ENCODE measurements at regions of chr5 and their contacts with region 1.

Region 1: GRCh38 chr5:41270423-41271251 is 57.3 kb upstream of the C6 start:
- DNase-seq: peak; percentile 15
- H3K4me3 ChIP-seq: no peak overlapping the region
- H3K27ac ChIP-seq: no peak overlapping the region
- H3K4me1 ChIP-seq: peaks cover 0 to 7% (median 0%) of the 10 kb centered on the region in 4 donors
- H3K27me3 ChIP-seq: no peaks in the 10 kb centered on the region
- CTCF ChIP-seq: peak; percentile 53 to 68 (median 55)
- EP300 ChIP-seq: no peak
- POLR2A ChIP-seq: no peak

Region 2: GRCh38 chr5:40791715-40792139 is 478.9 kb before region 1 on chr5:
- in situ Hi-C with region 1: no loop called
- intact Hi-C with region 1: no loop called
- DNase-seq: no peak
- H3K4me3 ChIP-seq: no peak overlapping the region
- H3K27ac ChIP-seq: peak overlapping the region in 2 of 4 donors; percentile 4 to 27
- H3K4me1 ChIP-seq: peaks cover 10 to 66% (median 34%) of the 10 kb centered on the region in 4 donors
- H3K27me3 ChIP-seq: no peaks in the 10 kb centered on the region
- CTCF ChIP-seq: no peak
- EP300 ChIP-seq: no peak
- POLR2A ChIP-seq: no peak

Region 3: GRCh38 chr5:41012318-41012717 is 258.3 kb before region 1 on chr5:
- in situ Hi-C with region 1: no loop called
- intact Hi-C with region 1: no loop called
- DNase-seq: no peak
- H3K4me3 ChIP-seq: no peak overlapping the region
- H3K27ac ChIP-seq: no peak overlapping the region
- H3K4me1 ChIP-seq: no peaks in the 10 kb centered on the region
- H3K27me3 ChIP-seq: no peaks in the 10 kb centered on the region
- CTCF ChIP-seq: no peak
- EP300 ChIP-seq: no peak
- POLR2A ChIP-seq: no peak

Region 4: DNA sequence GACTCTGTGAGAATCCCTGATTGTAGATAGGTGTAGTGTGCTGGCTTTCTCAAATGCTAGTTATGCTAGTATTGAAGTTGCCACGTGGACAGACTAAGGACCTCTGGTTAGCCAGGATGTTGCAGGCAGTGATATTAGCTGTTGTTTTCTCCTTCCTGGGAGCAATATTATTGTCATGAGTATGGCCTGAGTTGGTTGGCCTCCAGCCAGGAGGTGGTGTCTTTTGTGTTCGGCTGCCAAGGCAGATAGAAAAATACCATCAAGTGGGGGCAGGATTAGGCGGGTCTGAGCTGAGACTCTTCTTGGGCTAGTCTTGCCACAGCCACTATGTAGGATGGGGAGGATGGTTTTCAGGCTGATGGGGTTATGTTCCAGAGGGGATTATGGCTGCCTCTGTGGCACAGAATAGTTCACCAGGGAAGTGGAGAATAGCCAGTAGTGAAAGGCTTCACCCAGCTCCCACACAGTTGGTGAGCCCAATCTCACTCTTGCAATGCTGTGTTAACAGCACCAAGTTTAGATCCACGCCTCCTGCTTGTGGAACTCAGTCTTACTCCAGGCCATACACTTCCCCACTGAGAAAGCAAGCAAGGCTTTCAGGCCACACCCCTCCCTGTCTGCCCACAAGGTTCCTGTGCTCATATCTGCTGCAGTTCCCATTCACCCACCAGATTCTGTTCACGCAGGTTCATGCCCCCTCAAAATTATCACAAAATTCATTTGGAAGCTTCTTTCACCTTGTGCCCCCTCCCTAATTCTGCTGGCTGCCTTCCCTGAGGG is 1183.8 kb after region 1 on chr5:
- in situ Hi-C with region 1: no loop called
- intact Hi-C with region 1: loop called (anchors 5 kb)
- DNase-seq: no peak
- H3K4me3 ChIP-seq: no peak overlapping the region
- H3K27ac ChIP-seq: no peak overlapping the region
- H3K4me1 ChIP-seq: no peaks in the 10 kb centered on the region
- H3K27me3 ChIP-seq: no peaks in the 10 kb centered on the region
- CTCF ChIP-seq: no peak
- EP300 ChIP-seq: no peak
- POLR2A ChIP-seq: no peak

Measured in transverse colon (tissue), 4 donors.